ENCODE measurements at regions of chr4 and their contacts with region 1.

Region 1: GRCh38 chr4:153249199-153250041 is 45.2 kb downstream of the TRIM2 start:
- DNase-seq: peak; percentile 81 to 91 (median 86)
- ATAC-seq: peak; percentile 98
- H3K4me3 ChIP-seq: peak overlapping the region; percentile 62
- H3K4me3 Mint-ChIP-seq: peak overlapping the region; percentile 85 to 96 (median 92)
- H3K27ac ChIP-seq: peak overlapping the region; percentile 80
- H3K27ac Mint-ChIP-seq: peak overlapping the region; percentile 81 to 98 (median 96)
- H3K4me1 ChIP-seq: peaks cover 3 to 10% of the 10 kb centered on the region in 2 donors
- H3K4me1 Mint-ChIP-seq: peaks cover 7 to 44% (median 26%) of the 10 kb centered on the region in 7 donors
- H3K27me3 ChIP-seq: no peaks in the 10 kb centered on the region
- H3K27me3 Mint-ChIP-seq: peaks cover 0 to 11% (median 0%) of the 10 kb centered on the region in 5 donors

Region 2: DNA sequence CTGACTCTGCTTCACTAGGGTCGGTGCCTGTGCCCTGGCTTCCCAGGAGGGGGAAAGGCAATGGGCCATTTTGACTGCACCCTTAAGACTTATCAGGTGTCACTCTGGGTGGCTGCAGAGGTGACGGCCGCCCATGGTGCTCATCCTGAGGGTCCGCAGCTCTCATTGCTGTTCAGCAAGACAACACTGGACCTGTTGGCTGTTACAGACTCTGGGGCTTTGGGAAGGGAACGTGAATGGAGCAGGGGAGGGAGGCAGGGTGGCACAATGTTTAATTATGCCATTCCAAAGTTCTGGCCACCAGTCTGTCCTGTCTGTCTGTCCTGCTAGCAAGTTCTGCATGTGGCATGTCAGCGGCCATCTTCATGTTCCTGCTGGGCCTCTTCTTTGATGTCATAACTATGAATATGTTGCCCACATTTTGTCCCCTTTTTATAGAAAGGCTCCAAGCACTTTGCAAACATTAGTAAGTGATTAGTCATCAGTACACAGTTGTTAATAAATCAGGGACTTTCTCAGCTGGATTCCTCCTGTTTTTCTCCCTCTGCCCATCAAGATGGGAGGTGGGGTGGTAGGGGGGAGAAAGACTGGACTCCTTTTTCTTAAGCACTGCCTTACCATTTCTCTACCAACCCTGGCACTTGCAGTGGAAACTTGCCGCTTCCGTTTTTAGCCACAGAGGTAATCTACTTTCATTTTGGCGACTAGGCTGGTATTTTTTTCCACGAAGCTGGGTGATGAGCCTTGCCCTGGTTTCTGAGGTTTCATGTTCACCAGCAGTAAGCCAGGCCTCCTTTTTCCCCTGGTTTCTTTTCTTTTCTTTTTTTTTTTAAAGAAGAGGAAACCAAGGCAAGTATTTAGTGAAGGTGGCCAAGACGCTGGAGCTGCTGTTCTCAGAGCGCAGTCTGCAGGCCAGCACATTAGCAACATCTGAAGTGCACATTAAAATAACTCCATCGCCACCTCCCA is 133.8 kb before region 1 on chr4:
- CTCF ChIA-PET with region 1: no interaction called
- POLR2A ChIA-PET with region 1: no interaction called
- intact Hi-C with region 1: loop called in 1 of 2 experiments (anchors 1 kb)
- DNase-seq: peak in 8 of 9 donors; percentile 64 to 93 (median 89)
- ATAC-seq: peak; percentile 65
- H3K4me3 ChIP-seq: peak overlapping the region; percentile 46
- H3K4me3 Mint-ChIP-seq: peak overlapping the region in 2 of 10 donors; percentile 70 to 79
- H3K27ac ChIP-seq: peak overlapping the region; percentile 84
- H3K27ac Mint-ChIP-seq: no peak overlapping the region
- H3K4me1 ChIP-seq: peaks cover 43 to 62% of the 10 kb centered on the region in 2 donors
- H3K4me1 Mint-ChIP-seq: peaks cover 0 to 26% (median 11%) of the 10 kb centered on the region in 7 donors
- H3K27me3 ChIP-seq: no peaks in the 10 kb centered on the region
- H3K27me3 Mint-ChIP-seq: peaks cover 0 to 9% (median 0%) of the 10 kb centered on the region in 5 donors

Region 3: GRCh38 chr4:153142700-153143438 is 106.6 kb before region 1 on chr4:
- CTCF ChIA-PET with region 1: interaction called, 4 read pairs
- POLR2A ChIA-PET with region 1: no interaction called
- intact Hi-C with region 1: loop called in 1 of 2 experiments (anchors 1 kb)
- DNase-seq: peak in 8 of 9 donors; percentile 39 to 71 (median 58)
- ATAC-seq: peak; percentile 76
- H3K4me3 ChIP-seq: no peak overlapping the region
- H3K4me3 Mint-ChIP-seq: no peak overlapping the region
- H3K27ac ChIP-seq: no peak overlapping the region
- H3K27ac Mint-ChIP-seq: no peak overlapping the region
- H3K4me1 ChIP-seq: no peaks in the 10 kb centered on the region
- H3K4me1 Mint-ChIP-seq: peaks cover 0 to 4% (median 0%) of the 10 kb centered on the region in 7 donors
- H3K27me3 ChIP-seq: no peaks in the 10 kb centered on the region
- H3K27me3 Mint-ChIP-seq: peaks cover 0 to 14% (median 0%) of the 10 kb centered on the region in 5 donors

Region 4: DNA sequence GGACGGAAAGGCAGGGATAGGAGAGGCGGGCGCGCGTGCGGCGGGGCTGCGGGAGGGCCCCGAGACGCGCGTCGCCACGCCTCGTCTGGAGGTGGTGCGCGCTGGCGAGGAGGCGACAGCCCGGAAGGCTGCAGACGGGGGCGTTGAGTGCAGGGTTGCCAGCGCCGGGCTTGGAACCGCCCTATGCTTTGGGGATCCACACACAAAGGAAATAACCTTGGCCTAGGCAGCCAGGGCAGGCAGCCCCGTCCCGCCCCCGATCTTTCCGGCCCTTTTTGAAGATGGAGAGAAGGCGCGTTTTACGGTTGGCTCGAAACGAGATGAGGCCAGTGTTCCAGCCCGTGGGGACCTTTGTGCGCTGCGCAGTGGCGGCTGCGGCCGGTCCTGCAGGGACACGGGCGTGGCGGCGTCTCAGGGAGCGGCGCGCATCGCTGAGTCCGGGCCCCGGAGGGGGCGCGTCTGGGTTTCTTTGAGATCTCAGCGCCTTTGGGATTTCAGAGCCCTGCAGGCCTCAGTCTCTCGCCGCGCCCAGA is 96.0 kb before region 1 on chr4:
- CTCF ChIA-PET with region 1: interaction called, 3 read pairs
- POLR2A ChIA-PET with region 1: no interaction called
- intact Hi-C with region 1: loop called (anchors 1 kb)
- DNase-seq: peak; percentile 53 to 84 (median 78)
- ATAC-seq: peak; percentile 95
- H3K4me3 ChIP-seq: peak overlapping the region; percentile 81
- H3K4me3 Mint-ChIP-seq: peak overlapping the region; percentile 91 to 96 (median 92)
- H3K27ac ChIP-seq: peak overlapping the region; percentile 69
- H3K27ac Mint-ChIP-seq: peak overlapping the region; percentile 78 to 90 (median 85)
- H3K4me1 ChIP-seq: peaks cover 3 to 12% of the 10 kb centered on the region in 2 donors
- H3K4me1 Mint-ChIP-seq: peaks cover 23 to 42% (median 38%) of the 10 kb centered on the region in 7 donors
- H3K27me3 ChIP-seq: no peaks in the 10 kb centered on the region
- H3K27me3 Mint-ChIP-seq: peaks cover 0 to 43% (median 0%) of the 10 kb centered on the region in 5 donors

Region 5: GRCh38 chr4:153204247-153205027 is 45.0 kb before region 1 on chr4 and contains the start of gene TRIM2:
- CTCF ChIA-PET with region 1: interaction called, 6 read pairs
- POLR2A ChIA-PET with region 1: interaction called, 3 read pairs
- intact Hi-C with region 1: loop called in 1 of 2 experiments (anchors 5 kb)
- DNase-seq: no peak
- ATAC-seq: no peak
- H3K4me3 ChIP-seq: peak within 1 kb of the TSS; percentile 38
- H3K4me3 Mint-ChIP-seq: peak within 1 kb of the TSS; percentile 42 to 76 (median 70)
- H3K27ac ChIP-seq: no peak within 1 kb of the TSS
- H3K27ac Mint-ChIP-seq: peak within 1 kb of the TSS in 6 of 9 donors; percentile 17 to 81 (median 38)
- H3K4me1 ChIP-seq: peaks cover 12 to 18% of the 10 kb centered on the region in 2 donors
- H3K4me1 Mint-ChIP-seq: peaks cover 5 to 24% (median 18%) of the 10 kb centered on the region in 7 donors
- H3K27me3 ChIP-seq: no peaks in the 10 kb centered on the region
- H3K27me3 Mint-ChIP-seq: peaks cover 0 to 2% (median 0%) of the 10 kb centered on the region in 5 donors
- total RNA-seq, gene TRIM2: 0.12 to 3.9 (median 2.3) TPM

Region 6: DNA sequence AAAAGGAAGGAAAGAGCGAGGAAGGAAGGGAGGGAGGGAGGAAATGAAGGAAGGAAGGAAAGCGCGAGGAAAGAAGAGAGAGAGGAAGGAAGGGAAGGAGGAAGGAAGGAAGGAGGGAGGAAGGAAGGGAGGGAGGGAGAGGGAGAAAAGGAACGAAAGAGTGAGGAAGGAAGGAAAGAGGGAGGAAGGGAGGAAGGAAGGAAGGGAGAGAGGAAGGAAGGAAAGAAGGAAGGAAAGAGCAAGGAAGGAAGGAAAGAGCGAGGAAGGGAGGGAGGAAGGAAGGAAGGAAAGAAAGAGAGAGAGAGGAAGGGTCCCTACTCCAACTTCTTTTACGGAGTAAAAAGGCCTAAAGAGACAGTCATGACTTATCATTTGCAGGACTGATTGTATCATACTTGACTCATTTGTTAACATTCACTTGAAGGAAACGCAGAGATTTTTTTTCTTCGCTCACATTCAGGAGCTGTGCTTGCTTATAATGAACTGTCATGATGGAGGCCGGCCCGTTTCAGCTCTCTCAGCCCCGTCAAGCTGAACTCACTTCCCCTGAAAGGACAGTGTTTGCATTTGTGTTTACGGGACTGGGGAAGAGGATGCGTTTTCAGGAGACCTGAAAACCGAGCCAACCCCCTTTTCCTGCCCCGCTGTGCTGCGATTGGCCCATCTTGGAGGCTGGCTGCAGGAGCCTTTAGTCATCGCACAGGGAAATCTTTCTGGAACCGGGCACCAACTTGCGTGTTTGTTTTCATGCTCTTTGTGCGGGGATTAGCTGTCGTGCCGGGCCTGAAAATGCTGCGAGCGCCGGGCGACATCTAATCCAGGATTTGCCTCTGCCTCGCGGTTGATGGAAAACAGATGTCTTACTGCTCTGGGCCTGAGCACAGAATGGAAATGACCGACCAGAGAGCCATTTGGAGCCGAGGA is 27.4 kb before region 1 on chr4:
- CTCF ChIA-PET with region 1: no interaction called
- POLR2A ChIA-PET with region 1: interaction called, 3 read pairs
- intact Hi-C with region 1: loop called (anchors 1 to 2 kb)
- DNase-seq: peak in 8 of 9 donors; percentile 19 to 42 (median 31)
- ATAC-seq: peak; percentile 65
- H3K4me3 ChIP-seq: peak overlapping the region; percentile 62
- H3K4me3 Mint-ChIP-seq: peak overlapping the region; percentile 86 to 96 (median 92)
- H3K27ac ChIP-seq: peak overlapping the region; percentile 60
- H3K27ac Mint-ChIP-seq: peak overlapping the region in 8 of 9 donors; percentile 42 to 88 (median 76)
- H3K4me1 ChIP-seq: peaks cover 0 to 24% of the 10 kb centered on the region in 2 donors
- H3K4me1 Mint-ChIP-seq: peaks cover 23 to 48% (median 42%) of the 10 kb centered on the region in 7 donors
- H3K27me3 ChIP-seq: no peaks in the 10 kb centered on the region
- H3K27me3 Mint-ChIP-seq: peaks cover 0 to 66% (median 3%) of the 10 kb centered on the region in 5 donors

Region 7: DNA sequence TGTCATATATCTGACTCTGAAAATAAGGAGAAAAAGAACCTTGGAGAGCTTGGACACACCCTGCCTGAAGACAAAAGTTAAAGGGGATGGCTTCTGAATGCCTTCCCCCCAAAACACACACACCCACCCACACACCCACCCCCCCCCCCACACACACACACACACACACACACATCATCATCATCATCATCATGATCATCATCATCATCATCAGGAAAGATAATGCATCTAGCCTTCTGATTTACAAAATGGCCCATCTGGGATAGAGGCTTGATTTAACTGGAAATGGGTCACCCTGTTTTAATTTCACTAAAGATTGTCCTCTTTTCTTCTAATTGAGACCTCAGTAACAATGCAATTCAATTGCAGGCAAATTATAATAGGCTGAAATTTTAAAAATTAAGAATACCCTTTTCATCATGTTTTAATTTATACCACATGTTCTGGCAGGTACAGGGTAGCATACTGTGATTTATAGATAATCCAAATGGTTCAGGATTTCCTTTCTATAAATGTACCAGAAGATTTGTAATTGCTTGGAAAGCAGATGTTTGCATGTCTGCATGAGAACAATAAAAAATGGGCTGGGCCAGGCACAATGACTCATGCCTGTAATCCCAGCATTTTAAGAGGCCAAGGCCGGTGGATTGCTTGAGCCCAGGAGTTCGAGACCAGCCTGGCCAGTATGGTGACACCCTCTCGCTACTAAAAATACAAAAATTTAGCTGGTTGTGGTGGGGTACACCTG is 11.3 kb after region 1 on chr4:
- CTCF ChIA-PET with region 1: no interaction called
- POLR2A ChIA-PET with region 1: no interaction called
- intact Hi-C with region 1: no loop called
- DNase-seq: no peak
- ATAC-seq: no peak
- H3K4me3 ChIP-seq: no peak overlapping the region
- H3K4me3 Mint-ChIP-seq: no peak overlapping the region
- H3K27ac ChIP-seq: no peak overlapping the region
- H3K27ac Mint-ChIP-seq: no peak overlapping the region
- H3K4me1 ChIP-seq: peaks cover 0 to 4% of the 10 kb centered on the region in 2 donors
- H3K4me1 Mint-ChIP-seq: peaks cover 0 to 4% (median 0%) of the 10 kb centered on the region in 7 donors
- H3K27me3 ChIP-seq: peaks cover 0 to 5% of the 10 kb centered on the region in 2 donors
- H3K27me3 Mint-ChIP-seq: peaks cover 0 to 15% (median 8%) of the 10 kb centered on the region in 5 donors

Region 8: DNA sequence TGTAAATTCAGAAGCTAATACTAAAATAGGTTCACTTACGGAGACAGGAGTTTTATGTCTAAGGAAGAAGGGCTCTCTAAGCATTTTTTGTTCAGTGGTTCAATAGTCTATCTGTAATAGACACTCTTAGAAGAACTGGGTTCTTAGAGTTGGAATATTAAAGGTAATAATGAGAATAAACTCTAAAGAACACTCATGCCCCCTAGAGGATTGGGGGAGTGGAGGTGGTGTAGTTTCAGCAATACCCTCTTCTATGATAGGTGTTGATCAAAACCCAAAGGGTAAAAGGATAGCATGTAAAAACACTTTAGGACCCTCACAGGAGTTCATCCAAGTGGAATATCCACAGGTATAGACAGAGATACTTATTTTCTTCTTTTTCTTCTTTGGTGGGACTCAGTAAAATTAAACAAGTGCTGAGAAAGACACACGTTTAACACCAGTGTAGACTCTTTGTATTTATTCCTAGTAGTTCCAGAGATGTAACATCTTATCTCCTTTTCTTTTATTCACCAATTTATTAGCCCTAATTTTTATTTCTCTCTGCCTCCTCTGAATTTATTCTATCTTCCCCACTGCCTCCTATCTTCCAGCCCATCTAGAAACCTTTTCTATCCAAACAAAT is 69.4 kb after region 1 on chr4:
- CTCF ChIA-PET with region 1: interaction called, 3 read pairs
- POLR2A ChIA-PET with region 1: interaction called, 3 read pairs
- intact Hi-C with region 1: loop called in 1 of 2 experiments (anchors 5 kb)
- DNase-seq: peak in 6 of 9 donors; percentile 11 to 56 (median 44)
- ATAC-seq: peak; percentile 54
- H3K4me3 ChIP-seq: no peak overlapping the region
- H3K4me3 Mint-ChIP-seq: no peak overlapping the region
- H3K27ac ChIP-seq: no peak overlapping the region
- H3K27ac Mint-ChIP-seq: no peak overlapping the region
- H3K4me1 ChIP-seq: no peaks in the 10 kb centered on the region
- H3K4me1 Mint-ChIP-seq: no peaks in the 10 kb centered on the region
- H3K27me3 ChIP-seq: no peaks in the 10 kb centered on the region
- H3K27me3 Mint-ChIP-seq: no peaks in the 10 kb centered on the region

Region 9: DNA sequence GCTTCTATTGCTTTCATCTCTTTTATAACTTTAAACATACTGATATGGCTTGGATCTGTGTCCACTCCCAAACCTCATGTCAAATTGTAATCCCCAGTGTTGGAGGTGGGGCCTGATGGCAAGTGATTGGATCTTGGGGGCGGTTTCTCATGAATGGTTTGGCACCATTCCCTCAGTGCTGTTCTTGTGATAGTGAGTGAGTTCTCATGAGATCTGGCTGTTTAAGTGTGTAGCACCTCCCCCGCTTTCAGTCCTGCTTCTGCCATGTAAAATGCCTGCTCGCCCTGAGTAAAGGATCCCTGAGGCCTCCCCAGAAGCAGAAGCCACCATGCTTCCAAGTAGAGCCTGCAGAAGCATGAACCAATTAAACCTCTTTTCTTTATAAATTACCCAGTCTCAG is 112.8 kb after region 1 on chr4:
- CTCF ChIA-PET with region 1: no interaction called
- POLR2A ChIA-PET with region 1: no interaction called
- intact Hi-C with region 1: no loop called
- DNase-seq: no peak
- ATAC-seq: no peak
- H3K4me3 ChIP-seq: no peak overlapping the region
- H3K4me3 Mint-ChIP-seq: no peak overlapping the region
- H3K27ac ChIP-seq: no peak overlapping the region
- H3K27ac Mint-ChIP-seq: no peak overlapping the region
- H3K4me1 ChIP-seq: no peaks in the 10 kb centered on the region
- H3K4me1 Mint-ChIP-seq: peaks cover 0 to 6% (median 4%) of the 10 kb centered on the region in 7 donors
- H3K27me3 ChIP-seq: no peaks in the 10 kb centered on the region
- H3K27me3 Mint-ChIP-seq: no peaks in the 10 kb centered on the region